ENCODE measurements at regions of chrX and their contacts with region 1.

Region 1: DNA sequence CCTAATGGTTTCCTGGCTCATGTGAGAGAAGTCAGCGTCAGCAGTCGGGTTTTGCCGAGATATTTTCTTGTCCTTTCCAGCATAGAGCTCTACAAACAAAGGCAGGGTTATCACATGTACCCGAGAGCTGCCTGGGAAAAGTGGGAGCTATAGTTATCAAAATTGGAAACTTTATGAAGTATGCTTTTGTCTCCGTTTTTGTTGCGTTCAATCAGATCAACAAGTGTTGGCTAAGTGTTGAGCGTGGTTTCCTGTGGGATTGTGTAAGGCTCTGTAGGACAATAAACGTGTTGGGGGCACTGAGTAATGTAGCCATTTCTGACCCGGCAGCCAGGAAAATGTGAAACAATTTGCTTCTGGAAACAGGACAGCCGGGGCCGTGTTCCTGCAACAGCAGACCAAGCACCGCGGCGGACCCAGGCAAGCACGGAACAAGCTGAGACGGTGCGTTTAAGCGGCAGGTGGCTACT is at the start of gene BMX:
- DNase-seq: peak; percentile 88
- H3K4me3 ChIP-seq: peak within 1 kb of the TSS; percentile 56 to 88 (median 67)
- H3K27ac ChIP-seq: peak within 1 kb of the TSS; percentile 96
- H3K4me1 ChIP-seq: peaks cover 70% of the 10 kb centered on the region
- H3K27me3 ChIP-seq: no peaks in the 10 kb centered on the region
- CTCF ChIP-seq: no peak
- POLR2A ChIP-seq: peak; percentile 62
- total RNA-seq, gene BMX: 86.0 and 105 TPM in 2 replicates

Region 2: GRCh38 chrX:15471016-15471415 is 29.5 kb before region 1 on chrX:
- CTCF ChIA-PET with region 1: no interaction called
- POLR2A ChIA-PET with region 1: no interaction called
- dilution Hi-C with region 1: no loop called
- intact Hi-C with region 1: no loop called
- DNase-seq: peak; percentile 67
- H3K4me3 ChIP-seq: no peak overlapping the region
- H3K27ac ChIP-seq: no peak overlapping the region
- H3K4me1 ChIP-seq: peaks cover 19% of the 10 kb centered on the region
- H3K27me3 ChIP-seq: no peaks in the 10 kb centered on the region
- CTCF ChIP-seq: peak; percentile 62 to 70
- POLR2A ChIP-seq: no peak

Region 3: DNA sequence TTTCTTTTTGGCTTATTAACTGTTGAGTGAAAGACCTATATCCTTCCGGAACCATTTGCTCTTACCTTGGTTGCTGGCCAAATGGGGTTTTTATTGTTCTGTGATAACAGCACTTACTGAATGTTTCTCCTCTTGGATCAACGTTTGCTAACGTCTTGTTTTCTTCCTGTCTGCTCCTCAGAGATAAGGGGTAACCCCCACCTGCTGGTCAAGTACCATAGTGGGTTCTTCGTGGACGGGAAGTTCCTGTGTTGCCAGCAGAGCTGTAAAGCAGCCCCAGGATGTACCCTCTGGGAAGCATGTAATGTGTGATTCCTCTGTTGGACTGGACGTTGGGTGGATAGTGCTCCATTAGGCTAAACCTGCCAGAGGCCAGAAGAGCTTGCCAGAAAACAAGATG is 15.4 kb after region 1 on chrX:
- CTCF ChIA-PET with region 1: interaction called, 14 read pairs
- POLR2A ChIA-PET with region 1: interaction called, 21 read pairs
- dilution Hi-C with region 1: no loop called
- intact Hi-C with region 1: loop called (anchors 1 kb)
- DNase-seq: peak; percentile 97
- H3K4me3 ChIP-seq: no peak overlapping the region
- H3K27ac ChIP-seq: peak overlapping the region; percentile 91
- H3K4me1 ChIP-seq: peaks cover 77% of the 10 kb centered on the region
- H3K27me3 ChIP-seq: no peaks in the 10 kb centered on the region
- CTCF ChIP-seq: no peak
- POLR2A ChIP-seq: no peak

Region 4: GRCh38 chrX:15524417-15524816 is 23.9 kb after region 1 on chrX:
- CTCF ChIA-PET with region 1: interaction called, 4 read pairs
- POLR2A ChIA-PET with region 1: interaction called, 10 read pairs
- dilution Hi-C with region 1: no loop called
- intact Hi-C with region 1: loop called (anchors 1 kb)
- DNase-seq: peak; percentile 81
- H3K4me3 ChIP-seq: no peak overlapping the region
- H3K27ac ChIP-seq: peak overlapping the region; percentile 73
- H3K4me1 ChIP-seq: peaks cover 74% of the 10 kb centered on the region
- H3K27me3 ChIP-seq: no peaks in the 10 kb centered on the region
- CTCF ChIP-seq: no peak
- POLR2A ChIP-seq: no peak